ENCODE measurements at regions of chr14 and their contacts with region 1.

Region 1: DNA sequence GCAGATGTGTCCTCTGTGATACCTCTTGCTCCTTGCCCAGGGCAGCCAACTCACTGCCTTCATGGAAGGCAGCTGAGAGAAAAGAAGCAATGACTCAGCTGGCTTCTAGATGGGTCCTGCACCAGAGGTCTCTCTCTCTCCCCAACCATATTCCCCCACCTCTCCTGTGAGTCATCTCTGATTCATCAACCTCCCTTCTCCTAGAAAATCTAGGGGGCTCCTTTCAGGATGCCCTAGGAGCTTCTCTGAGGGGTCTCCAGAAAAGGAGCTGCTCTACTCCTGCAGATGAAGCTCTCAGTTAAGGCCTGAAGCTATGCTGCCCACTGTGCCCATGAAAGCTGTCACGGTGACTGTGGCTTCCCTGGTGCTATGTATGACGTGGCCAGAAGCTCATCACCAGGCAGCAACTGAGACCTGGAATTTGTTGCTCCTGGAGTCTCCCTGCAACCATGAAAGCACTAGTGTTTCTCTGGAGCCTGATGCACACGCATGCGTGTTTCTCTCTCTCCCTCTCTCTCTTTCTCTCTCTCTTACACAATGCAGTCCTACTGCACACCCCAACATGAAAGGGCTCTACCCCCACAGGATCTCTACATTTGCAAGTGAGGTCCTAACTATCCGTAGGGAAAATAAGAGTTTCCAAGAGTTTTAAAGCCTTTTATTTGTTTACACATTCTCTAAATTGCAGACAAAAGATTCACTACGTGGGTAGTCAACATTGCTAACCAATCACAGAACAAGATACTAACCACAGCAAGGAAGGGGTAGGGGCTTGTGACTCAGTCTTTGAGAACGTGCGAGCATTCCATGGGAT is 285.3 kb downstream of the DPF3 start:
- DNase-seq: peak; percentile 90
- H3K4me3 ChIP-seq: no peak overlapping the region
- H3K27ac ChIP-seq: peak overlapping the region; percentile 48
- H3K4me1 ChIP-seq: peaks cover 21% of the 10 kb centered on the region
- H3K27me3 ChIP-seq: no peaks in the 10 kb centered on the region
- CTCF ChIP-seq: no peak

Region 2: GRCh38 chr14:72558721-72559120 is 49.9 kb before region 1 on chr14:
- CTCF ChIA-PET with region 1: interaction called, 5 read pairs
- dilution Hi-C with region 1: no loop called
- in situ Hi-C with region 1: no loop called
- intact Hi-C with region 1: loop called (anchors 2 kb)
- DNase-seq: peak; percentile 88
- H3K4me3 ChIP-seq: no peak overlapping the region
- H3K27ac ChIP-seq: peak overlapping the region; percentile 85
- H3K4me1 ChIP-seq: peaks cover 36% of the 10 kb centered on the region
- H3K27me3 ChIP-seq: no peaks in the 10 kb centered on the region
- CTCF ChIP-seq: no peak

Region 3: GRCh38 chr14:72643317-72643801 is 34.8 kb after region 1 on chr14:
- CTCF ChIA-PET with region 1: no interaction called
- dilution Hi-C with region 1: no loop called
- in situ Hi-C with region 1: no loop called
- intact Hi-C with region 1: loop called (anchors 1 kb)
- DNase-seq: peak; percentile 96
- H3K4me3 ChIP-seq: no peak overlapping the region
- H3K27ac ChIP-seq: peak overlapping the region; percentile 76
- H3K4me1 ChIP-seq: peaks cover 21% of the 10 kb centered on the region
- H3K27me3 ChIP-seq: no peaks in the 10 kb centered on the region
- CTCF ChIP-seq: no peak

Region 4: DNA sequence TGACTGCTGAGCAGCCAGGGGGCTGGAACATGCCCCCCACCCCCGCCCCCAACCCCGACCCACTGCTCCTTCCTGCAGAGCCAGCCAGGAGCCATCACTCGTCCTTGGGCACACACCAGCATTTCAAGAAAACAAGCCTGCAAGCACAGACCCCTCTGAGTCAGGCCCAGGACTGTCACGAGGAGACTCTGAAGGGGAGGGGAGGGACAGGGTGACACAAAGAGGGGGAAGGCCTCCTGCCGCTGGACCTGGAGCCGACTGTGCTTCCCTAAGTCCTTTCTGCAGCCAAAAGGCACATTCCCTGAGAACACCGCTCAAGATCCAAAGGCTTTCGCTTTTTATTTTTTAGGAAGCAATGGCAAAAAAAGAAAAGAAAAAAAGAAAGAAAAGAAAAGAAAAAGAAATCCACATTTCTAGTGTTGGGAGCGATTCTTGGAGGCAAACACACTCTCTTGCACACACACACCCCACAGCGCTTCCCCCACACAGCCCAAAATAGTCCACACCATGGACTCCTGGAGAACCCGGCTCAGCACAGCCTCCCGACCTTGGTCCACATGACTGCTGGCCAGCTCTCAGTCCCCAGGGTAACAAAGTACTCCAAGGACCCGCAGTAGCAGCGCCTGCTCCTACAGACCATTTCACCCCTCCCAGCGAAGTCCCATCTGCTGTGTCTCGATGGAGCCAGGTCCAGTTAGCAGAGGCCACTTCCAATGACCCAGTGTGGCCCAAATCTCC is 183.6 kb after region 1 on chr14:
- CTCF ChIA-PET with region 1: no interaction called
- dilution Hi-C with region 1: no loop called
- in situ Hi-C with region 1: no loop called
- intact Hi-C with region 1: no loop called
- DNase-seq: no peak
- H3K4me3 ChIP-seq: no peak overlapping the region
- H3K27ac ChIP-seq: no peak overlapping the region
- H3K4me1 ChIP-seq: no peaks in the 10 kb centered on the region
- H3K27me3 ChIP-seq: no peaks in the 10 kb centered on the region
- CTCF ChIP-seq: no peak

Measured in mammary epithelial cell (primary cell).